Caco-2 (cell line): ENCODE measurements at regions of chr19 and their contacts with region 1.

Region 1: DNA sequence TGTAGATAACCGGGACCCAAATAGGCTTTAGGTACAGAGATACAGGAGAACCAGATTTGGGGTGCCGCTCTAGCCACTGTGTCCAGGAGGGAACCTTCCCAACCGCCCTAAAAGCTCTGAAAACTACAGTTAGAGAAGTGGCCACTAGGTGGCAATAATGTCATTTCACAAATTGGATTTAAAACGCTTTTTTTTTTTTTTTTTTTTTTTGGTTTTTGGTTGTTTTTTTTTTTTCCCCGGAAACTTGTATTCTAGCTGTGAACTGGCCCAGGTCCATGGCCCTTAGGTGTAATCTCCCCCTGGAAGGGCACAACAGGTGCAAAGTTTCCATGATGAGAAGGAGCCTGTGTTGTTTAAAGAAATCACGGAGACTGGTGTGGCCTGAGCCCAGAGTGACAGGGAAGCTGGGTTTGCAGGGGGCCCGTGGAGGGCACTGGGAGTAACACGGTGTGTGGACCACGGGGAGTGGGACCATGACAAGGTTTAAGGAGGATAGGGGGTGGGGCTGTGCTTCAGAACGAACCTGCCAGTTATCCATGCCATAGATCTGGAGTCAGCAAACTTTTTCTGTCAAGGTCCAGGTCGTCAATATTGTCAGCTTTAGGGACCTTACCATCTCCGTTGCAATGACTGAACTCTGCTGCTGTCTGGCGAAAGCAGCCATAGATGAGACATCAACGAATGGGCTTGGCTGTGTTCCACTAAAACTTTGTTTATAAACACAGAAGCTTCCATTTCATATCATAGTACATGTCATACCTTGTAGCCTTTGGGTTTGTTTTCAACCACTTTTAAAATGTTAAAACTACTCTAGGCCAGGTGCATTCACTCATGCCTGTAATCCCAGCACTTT is 10.1 kb downstream of the OR1I1 start:
- DNase-seq: peak in 1 of 2 experiments; percentile 63
- H3K4me3 ChIP-seq: no peak overlapping the region
- H3K4me3 Mint-ChIP-seq: no peak overlapping the region
- H3K27ac Mint-ChIP-seq: no peak overlapping the region
- H3K4me1 ChIP-seq: no peaks in the 10 kb centered on the region
- H3K4me1 Mint-ChIP-seq: no peaks in the 10 kb centered on the region
- H3K27me3 ChIP-seq: no peaks in the 10 kb centered on the region
- H3K27me3 Mint-ChIP-seq: peaks cover 12% of the 10 kb centered on the region
- CTCF ChIP-seq: peak; percentile 30 to 60

Region 2: GRCh38 chr19:15072930-15073647 is 19.0 kb before region 1 on chr19:
- CTCF ChIA-PET with region 1: interaction called, 10 read pairs
- POLR2A ChIA-PET with region 1: no interaction called
- intact Hi-C with region 1: no loop called
- DNase-seq: peak; percentile 80 to 91
- H3K4me3 ChIP-seq: no peak overlapping the region
- H3K4me3 Mint-ChIP-seq: peak overlapping the region; percentile 64
- H3K27ac Mint-ChIP-seq: peak overlapping the region; percentile 83
- H3K4me1 ChIP-seq: peaks cover 19% of the 10 kb centered on the region
- H3K4me1 Mint-ChIP-seq: peaks cover 13% of the 10 kb centered on the region
- H3K27me3 ChIP-seq: no peaks in the 10 kb centered on the region
- H3K27me3 Mint-ChIP-seq: no peaks in the 10 kb centered on the region
- CTCF ChIP-seq: peak; percentile 34 to 35

Region 3: GRCh38 chr19:15149737-15150136 is 57.6 kb after region 1 on chr19:
- CTCF ChIA-PET with region 1: interaction called, 9 read pairs
- POLR2A ChIA-PET with region 1: no interaction called
- intact Hi-C with region 1: loop called (anchors 1 kb)
- DNase-seq: no peak
- H3K4me3 ChIP-seq: no peak overlapping the region
- H3K4me3 Mint-ChIP-seq: no peak overlapping the region
- H3K27ac Mint-ChIP-seq: no peak overlapping the region
- H3K4me1 ChIP-seq: no peaks in the 10 kb centered on the region
- H3K4me1 Mint-ChIP-seq: no peaks in the 10 kb centered on the region
- H3K27me3 ChIP-seq: no peaks in the 10 kb centered on the region
- H3K27me3 Mint-ChIP-seq: peaks cover 3% of the 10 kb centered on the region
- CTCF ChIP-seq: no peak